Activated CD4-positive, alpha-beta T cell treated with anti-CD3 and anti-CD28 coated beads for 36 hours (primary cell): ENCODE measurements at regions of chr3 and their contacts with region 1.

Region 1: GRCh38 chr3:188400494-188401243 is 246.7 kb downstream of the LPP start:
- DNase-seq: peak; percentile 46
- ATAC-seq: peak; percentile 85
- H3K4me3 Mint-ChIP-seq: no peak overlapping the region
- H3K27ac Mint-ChIP-seq: peak overlapping the region; percentile 26
- H3K4me1 Mint-ChIP-seq: peaks cover 69% of the 10 kb centered on the region
- H3K27me3 Mint-ChIP-seq: no peaks in the 10 kb centered on the region

Region 2: GRCh38 chr3:188439080-188439479 is 38.4 kb after region 1 on chr3:
- CTCF ChIA-PET with region 1: no interaction called
- POLR2A ChIA-PET with region 1: no interaction called
- intact Hi-C with region 1: loop called in 1 of 2 experiments (anchors 1 kb)
- DNase-seq: peak; percentile 21
- ATAC-seq: peak; percentile 81
- H3K4me3 Mint-ChIP-seq: peak overlapping the region; percentile 5
- H3K27ac Mint-ChIP-seq: peak overlapping the region; percentile 61
- H3K4me1 Mint-ChIP-seq: peaks cover 37% of the 10 kb centered on the region
- H3K27me3 Mint-ChIP-seq: no peaks in the 10 kb centered on the region

Region 3: DNA sequence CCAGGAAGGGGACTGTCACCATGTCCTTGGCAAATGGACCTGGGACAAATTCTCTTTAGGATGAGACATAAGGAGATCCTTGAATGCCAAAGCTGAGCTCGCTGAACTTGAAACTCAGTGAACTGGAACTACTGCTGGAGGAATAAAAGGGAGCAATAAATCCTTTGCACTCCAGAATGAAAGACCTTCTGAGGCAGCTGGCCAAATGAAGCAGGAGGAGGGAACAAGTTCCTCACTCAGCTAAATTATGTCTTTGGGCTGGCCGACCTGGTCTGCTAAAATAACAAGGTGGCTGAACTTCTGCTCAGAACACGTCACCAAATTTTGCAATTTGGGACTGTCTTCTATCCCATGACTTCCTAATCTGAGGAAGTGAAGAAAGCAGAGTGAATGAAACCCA is 68.0 kb after region 1 on chr3:
- CTCF ChIA-PET with region 1: no interaction called
- POLR2A ChIA-PET with region 1: no interaction called
- intact Hi-C with region 1: no loop called
- DNase-seq: no peak
- ATAC-seq: no peak
- H3K4me3 Mint-ChIP-seq: no peak overlapping the region
- H3K27ac Mint-ChIP-seq: no peak overlapping the region
- H3K4me1 Mint-ChIP-seq: no peaks in the 10 kb centered on the region
- H3K27me3 Mint-ChIP-seq: no peaks in the 10 kb centered on the region

Region 4: GRCh38 chr3:188807006-188807405 is 406.3 kb after region 1 on chr3:
- CTCF ChIA-PET with region 1: no interaction called
- POLR2A ChIA-PET with region 1: no interaction called
- intact Hi-C with region 1: no loop called
- DNase-seq: no peak
- ATAC-seq: no peak
- H3K4me3 Mint-ChIP-seq: no peak overlapping the region
- H3K27ac Mint-ChIP-seq: no peak overlapping the region
- H3K4me1 Mint-ChIP-seq: no peaks in the 10 kb centered on the region
- H3K27me3 Mint-ChIP-seq: no peaks in the 10 kb centered on the region